ENCODE measurements at regions of chr20 and their contacts with region 1.

Region 1: GRCh38 chr20:38453941-38454340 is 18.7 kb upstream of the RALGAPB start:
- DNase-seq: no peak
- H3K4me3 ChIP-seq: no peak overlapping the region
- H3K27ac ChIP-seq: no peak overlapping the region
- H3K4me1 ChIP-seq: peaks cover 49% of the 10 kb centered on the region
- H3K27me3 ChIP-seq: no peaks in the 10 kb centered on the region
- CTCF ChIP-seq: no peak
- POLR2A ChIP-seq: no peak

Region 2: DNA sequence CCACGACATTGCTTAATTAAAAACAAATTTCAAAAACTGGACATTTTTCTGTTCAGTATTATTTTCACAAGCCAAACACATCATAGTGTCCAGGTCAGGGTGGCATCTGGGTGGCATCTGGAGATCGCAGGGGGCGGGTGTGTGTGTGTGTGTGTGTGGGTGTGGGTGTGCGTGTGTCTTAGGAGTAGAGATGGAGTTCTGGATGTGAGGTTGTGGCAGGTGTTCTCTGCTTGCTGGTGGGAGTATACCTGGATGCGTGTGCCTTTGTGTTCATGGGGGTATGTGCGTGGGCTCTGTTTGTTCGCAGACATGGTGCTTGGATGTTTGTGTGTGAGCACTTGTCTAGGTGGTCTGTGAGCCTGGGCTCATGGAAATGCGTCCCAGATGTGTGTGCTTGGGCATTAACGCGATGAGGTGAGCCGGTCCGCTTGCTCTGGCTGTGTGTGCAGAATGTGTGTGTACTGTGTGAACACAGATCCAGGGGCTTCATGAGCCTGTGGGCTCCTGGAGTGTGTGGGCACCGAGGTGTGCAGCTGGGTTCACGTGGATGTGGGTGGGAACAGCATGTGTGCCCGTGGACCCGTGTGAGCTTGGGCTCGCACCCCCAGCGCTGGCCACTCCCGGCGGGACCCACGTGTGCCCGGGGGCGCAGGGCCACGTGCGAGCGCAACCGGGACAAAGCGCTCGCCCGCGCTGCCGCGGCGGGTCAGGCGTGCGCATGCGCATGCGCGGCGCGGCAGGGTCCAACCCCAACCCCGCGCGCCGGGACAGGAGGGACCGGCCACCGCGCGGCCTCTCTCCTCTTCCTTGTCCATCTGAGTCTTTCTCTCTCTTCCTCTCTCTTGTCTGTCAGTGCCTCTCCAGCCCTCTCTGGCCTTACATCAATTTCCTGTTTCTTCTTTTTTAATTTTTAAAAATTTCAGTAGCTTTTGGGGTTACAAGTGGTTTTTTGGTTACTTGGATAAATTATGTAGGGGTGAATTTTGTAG is 1047.6 kb before region 1 on chr20:
- CTCF ChIA-PET with region 1: no interaction called
- POLR2A ChIA-PET with region 1: interaction called, 13 read pairs
- dilution Hi-C with region 1: no loop called
- intact Hi-C with region 1: no loop called
- DNase-seq: peak; percentile 57
- H3K4me3 ChIP-seq: peak overlapping the region in 2 of 3 experiments; percentile 5 to 29
- H3K27ac ChIP-seq: no peak overlapping the region
- H3K4me1 ChIP-seq: peaks cover 10% of the 10 kb centered on the region
- H3K27me3 ChIP-seq: peaks cover 0 to 8% of the 10 kb centered on the region in 2 experiments
- CTCF ChIP-seq: no peak
- POLR2A ChIP-seq: peak; percentile 71

Region 3: DNA sequence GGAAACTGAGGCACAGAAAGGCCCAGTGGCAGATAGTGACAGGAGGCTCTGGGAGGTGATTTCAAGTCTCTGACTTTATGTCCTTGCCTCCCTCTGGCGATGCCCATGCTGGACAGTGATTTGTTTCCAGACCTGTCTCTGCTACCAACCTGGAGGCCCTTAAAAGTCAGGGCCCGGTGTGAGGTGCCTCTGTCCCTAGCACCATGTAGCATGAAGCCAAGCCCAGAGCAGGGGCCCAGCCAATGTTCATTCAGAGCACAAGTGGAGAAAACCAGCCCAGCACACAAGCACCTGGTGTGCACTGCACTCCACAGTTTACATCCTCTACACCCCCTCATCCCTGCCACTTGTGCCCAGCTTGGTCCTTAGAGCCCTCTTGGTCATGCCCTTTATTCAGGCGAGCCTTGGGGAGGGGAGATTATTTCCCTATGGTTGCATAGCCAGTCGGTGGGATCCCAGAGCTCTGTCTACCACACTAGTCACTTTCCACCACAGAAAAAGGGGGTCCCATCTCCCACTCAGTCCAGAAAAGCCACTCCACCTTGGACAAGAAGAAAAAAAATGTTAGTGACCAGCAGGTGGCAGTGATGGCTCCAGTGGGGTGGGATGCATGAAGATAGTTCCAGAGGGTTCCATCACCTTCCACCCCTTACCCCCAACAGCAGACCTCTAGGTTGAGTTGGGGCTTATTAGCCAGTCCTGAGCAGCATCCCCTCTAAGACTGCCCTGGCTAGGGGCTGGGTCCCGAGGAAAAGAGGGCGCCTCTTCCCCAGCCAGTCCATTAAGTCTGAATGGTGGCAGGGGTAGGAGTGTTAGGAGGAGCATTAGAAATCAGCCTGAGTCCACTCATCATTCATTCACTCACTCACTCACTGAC is 224.3 kb before region 1 on chr20:
- CTCF ChIA-PET with region 1: no interaction called
- POLR2A ChIA-PET with region 1: no interaction called
- dilution Hi-C with region 1: no loop called
- intact Hi-C with region 1: no loop called
- DNase-seq: peak; percentile 46
- H3K4me3 ChIP-seq: no peak overlapping the region
- H3K27ac ChIP-seq: no peak overlapping the region
- H3K4me1 ChIP-seq: peaks cover 10% of the 10 kb centered on the region
- H3K27me3 ChIP-seq: peaks cover 0 to 1% of the 10 kb centered on the region in 2 experiments
- CTCF ChIP-seq: peak; percentile 48 to 56
- POLR2A ChIP-seq: no peak

Region 4: GRCh38 chr20:38434743-38435554 is 19.0 kb before region 1 on chr20 and contains the start of gene SNHG17:
- CTCF ChIA-PET with region 1: interaction called, 19 read pairs
- POLR2A ChIA-PET with region 1: no interaction called
- dilution Hi-C with region 1: no loop called
- intact Hi-C with region 1: no loop called
- DNase-seq: peak; percentile 89
- H3K4me3 ChIP-seq: peak within 1 kb of the TSS; percentile 70 to 84 (median 77)
- H3K27ac ChIP-seq: peak within 1 kb of the TSS; percentile 14
- H3K4me1 ChIP-seq: peaks cover 18% of the 10 kb centered on the region
- H3K27me3 ChIP-seq: peaks cover 0 to 2% of the 10 kb centered on the region in 2 experiments
- CTCF ChIP-seq: peak; percentile 100
- POLR2A ChIP-seq: peak; percentile 96
- total RNA-seq, gene SNHG17: 39.6 and 94.0 TPM in 2 replicates

Region 5: DNA sequence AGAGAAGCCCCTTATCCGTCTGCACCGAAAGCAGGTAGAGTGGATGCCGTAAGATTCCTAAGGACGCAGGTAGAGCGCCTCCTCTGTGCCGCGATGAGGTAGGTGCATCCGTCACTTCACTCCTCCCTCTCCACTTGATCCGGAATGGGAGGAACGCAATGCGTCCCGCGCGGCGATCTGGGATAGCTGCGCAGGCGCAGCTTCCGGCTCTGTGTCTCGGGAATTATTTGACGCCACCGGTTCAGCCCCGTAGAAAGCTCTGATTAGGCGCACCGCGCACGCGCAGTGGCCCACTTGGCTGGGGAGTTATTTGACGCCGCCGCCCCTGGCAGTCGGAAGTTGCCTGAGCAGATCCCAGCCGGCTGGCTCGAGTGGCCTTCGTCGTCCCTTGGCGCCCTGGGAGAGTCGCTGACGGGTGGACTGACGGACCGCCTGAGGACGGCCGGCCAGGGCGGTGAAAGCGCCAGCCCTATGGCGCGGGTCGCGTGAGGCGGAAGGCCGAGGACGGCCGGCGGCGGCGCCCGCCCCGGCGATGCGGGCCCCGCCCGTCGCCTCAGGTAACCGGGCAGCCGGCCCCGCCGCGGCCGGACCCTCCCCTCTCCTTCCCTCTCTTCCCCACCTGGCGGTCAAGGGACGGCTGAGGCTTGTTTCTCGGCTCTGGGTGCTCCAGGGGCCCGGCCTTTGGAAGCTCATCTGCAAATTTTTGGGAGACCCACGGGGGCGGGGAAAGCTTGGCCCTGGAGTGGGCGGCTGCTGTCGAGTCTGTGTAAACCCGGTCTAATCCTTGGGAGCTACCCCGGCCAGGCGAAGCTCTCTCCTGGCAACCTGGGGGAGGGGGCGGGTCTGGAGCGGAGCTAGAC is 18.8 kb after region 1 on chr20 and contains the start of gene RALGAPB:
- CTCF ChIA-PET with region 1: interaction called, 41 read pairs
- POLR2A ChIA-PET with region 1: no interaction called
- dilution Hi-C with region 1: no loop called
- intact Hi-C with region 1: no loop called
- DNase-seq: peak; percentile 100
- H3K4me3 ChIP-seq: peak within 1 kb of the TSS; percentile 53 to 79 (median 70)
- H3K27ac ChIP-seq: peak within 1 kb of the TSS; percentile 50
- H3K4me1 ChIP-seq: peaks cover 15% of the 10 kb centered on the region
- H3K27me3 ChIP-seq: peaks cover 2 to 4% of the 10 kb centered on the region in 2 experiments
- CTCF ChIP-seq: peak; percentile 14 to 45
- POLR2A ChIP-seq: peak; percentile 51
- total RNA-seq, gene RALGAPB: 36.4 and 38.7 TPM in 2 replicates